ENCODE measurements at regions of chr11 and their contacts with region 1.

Region 1: GRCh38 chr11:1694064-1694845 is 2.7 kb upstream of the KRTAP5-6 start:
- DNase-seq: peak; percentile 47
- ATAC-seq: peak; percentile 93
- H3K4me3 ChIP-seq: peak overlapping the region; percentile 35 to 51; a peak in 3 of 4 replicates
- H3K27ac ChIP-seq: peak overlapping the region; percentile 91
- H3K4me1 ChIP-seq: peaks cover 20% of the 10 kb centered on the region
- H3K27me3 ChIP-seq: no peaks in the 10 kb centered on the region
- CTCF ChIP-seq: peak; percentile 87

Region 2: DNA sequence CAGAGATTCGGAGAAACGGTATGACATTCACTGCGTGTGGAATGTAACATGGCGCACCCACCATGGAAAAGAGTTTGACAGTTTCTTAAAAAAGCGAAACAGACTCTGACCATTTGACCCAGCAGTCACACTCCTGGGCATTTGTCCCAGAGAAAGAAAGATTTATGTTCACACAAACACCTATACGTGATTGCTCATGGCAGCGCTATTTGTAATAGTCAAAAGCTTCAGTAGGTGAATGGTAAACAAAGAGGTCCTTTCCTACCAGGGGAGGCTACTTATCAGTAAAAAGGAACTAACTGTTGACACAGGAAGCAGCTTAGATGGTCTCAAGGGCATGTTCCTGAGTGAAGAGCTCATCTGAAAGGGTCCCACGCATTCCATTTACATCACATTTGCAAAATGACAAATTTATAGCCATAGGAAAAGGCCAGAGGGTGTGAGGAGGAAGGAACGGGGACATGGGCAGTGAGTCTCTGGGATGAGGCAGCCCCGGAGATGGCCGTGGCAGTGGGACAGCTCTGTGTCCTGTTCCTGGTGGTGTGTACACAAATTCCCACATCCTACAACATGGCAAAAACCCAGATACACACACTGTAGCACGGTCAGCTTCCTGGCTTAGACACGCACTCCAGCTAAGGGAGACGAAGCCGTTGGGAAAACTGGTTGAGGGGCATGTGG is 11.9 kb before region 1 on chr11:
- CTCF ChIA-PET with region 1: interaction called, 12 read pairs
- POLR2A ChIA-PET with region 1: no interaction called
- in situ Hi-C with region 1: no loop called
- intact Hi-C with region 1: no loop called
- DNase-seq: peak; percentile 18
- ATAC-seq: peak; percentile 58
- H3K4me3 ChIP-seq: no peak overlapping the region
- H3K27ac ChIP-seq: peak overlapping the region; percentile 10
- H3K4me1 ChIP-seq: peaks cover 11% of the 10 kb centered on the region
- H3K27me3 ChIP-seq: no peaks in the 10 kb centered on the region
- CTCF ChIP-seq: no peak

Region 3: DNA sequence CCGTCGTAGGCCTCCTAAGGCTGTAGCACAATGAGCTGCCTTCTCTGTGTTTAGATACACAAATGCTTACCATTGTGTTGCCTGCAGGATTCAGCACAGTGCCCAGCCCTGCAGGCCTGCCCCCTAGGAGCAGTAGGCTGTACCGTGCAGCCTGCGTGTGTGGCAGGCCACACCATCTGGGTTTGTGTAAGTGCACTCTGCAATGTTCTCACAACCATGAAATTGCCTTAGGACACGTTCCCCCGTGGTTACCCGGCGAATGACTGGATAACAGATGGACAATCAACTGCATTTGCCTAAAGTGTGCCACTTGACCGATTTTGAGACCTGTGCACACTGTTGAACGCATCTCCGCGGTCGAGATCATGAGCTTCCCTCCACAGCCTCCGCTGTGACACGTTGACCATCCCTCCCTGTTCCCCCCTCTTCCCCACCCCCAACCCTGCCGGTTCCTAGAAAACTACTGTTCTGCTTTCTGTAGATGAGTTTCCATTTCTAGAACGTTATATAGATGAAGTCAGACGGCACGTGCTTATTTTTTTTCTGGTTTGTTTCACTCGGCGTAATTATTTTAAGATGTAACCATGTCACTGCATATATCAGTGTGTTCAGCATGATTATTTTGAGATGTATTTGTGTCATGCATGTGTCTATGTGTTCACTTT is 91.6 kb after region 1 on chr11:
- CTCF ChIA-PET with region 1: interaction called, 14 read pairs
- POLR2A ChIA-PET with region 1: no interaction called
- in situ Hi-C with region 1: no loop called
- intact Hi-C with region 1: no loop called
- DNase-seq: no peak
- ATAC-seq: no peak
- H3K4me3 ChIP-seq: no peak overlapping the region
- H3K27ac ChIP-seq: peak overlapping the region; percentile 2; the same call in 1 of the 2 replicates
- H3K4me1 ChIP-seq: peaks cover 37% of the 10 kb centered on the region
- H3K27me3 ChIP-seq: no peaks in the 10 kb centered on the region
- CTCF ChIP-seq: no peak

Region 4: DNA sequence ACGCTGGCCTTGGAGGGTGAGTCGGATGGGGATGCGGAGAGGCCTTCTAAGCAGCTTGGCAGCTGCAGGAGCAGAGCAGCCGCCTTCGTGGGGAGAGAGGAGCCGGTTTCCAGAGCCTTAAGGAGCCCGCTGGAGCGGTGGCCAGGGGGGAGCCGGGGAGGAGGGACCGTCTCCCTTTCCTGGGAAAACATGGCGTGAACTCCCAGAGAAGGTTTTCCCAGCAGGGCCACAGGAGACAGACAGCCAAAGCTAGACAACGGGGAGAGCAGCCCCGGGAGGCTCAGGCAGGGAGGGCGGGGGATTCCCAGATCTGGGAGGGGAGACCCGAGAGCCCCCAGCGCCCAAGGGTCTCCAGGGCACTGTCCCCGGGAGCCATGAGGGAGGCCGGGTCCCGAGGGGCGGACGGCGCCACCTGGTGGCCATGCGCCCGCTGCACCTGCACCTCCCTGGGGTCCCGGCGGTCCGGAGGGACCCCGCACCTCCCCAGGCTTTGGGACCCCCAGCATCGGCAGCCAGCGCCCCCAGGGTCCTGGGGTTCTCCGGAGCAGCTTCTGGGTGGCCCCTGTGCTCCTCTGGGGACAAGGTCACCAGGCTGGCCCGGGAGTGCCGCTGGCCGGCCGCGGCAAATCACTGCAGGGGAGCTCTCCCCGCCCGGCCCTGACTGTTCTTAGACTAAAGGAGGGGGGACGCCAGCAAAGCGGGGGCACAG is 138.1 kb after region 1 on chr11:
- CTCF ChIA-PET with region 1: interaction called, 168 read pairs
- POLR2A ChIA-PET with region 1: no interaction called
- in situ Hi-C with region 1: no loop called
- intact Hi-C with region 1: loop called (anchors 2 kb)
- DNase-seq: no peak
- ATAC-seq: peak; percentile 56
- H3K4me3 ChIP-seq: peak overlapping the region; percentile 17 to 40; a peak in 3 of 4 replicates
- H3K27ac ChIP-seq: peak overlapping the region; percentile 99
- H3K4me1 ChIP-seq: peaks cover 85% of the 10 kb centered on the region
- H3K27me3 ChIP-seq: no peaks in the 10 kb centered on the region
- CTCF ChIP-seq: peak; percentile 100

Region 5: DNA sequence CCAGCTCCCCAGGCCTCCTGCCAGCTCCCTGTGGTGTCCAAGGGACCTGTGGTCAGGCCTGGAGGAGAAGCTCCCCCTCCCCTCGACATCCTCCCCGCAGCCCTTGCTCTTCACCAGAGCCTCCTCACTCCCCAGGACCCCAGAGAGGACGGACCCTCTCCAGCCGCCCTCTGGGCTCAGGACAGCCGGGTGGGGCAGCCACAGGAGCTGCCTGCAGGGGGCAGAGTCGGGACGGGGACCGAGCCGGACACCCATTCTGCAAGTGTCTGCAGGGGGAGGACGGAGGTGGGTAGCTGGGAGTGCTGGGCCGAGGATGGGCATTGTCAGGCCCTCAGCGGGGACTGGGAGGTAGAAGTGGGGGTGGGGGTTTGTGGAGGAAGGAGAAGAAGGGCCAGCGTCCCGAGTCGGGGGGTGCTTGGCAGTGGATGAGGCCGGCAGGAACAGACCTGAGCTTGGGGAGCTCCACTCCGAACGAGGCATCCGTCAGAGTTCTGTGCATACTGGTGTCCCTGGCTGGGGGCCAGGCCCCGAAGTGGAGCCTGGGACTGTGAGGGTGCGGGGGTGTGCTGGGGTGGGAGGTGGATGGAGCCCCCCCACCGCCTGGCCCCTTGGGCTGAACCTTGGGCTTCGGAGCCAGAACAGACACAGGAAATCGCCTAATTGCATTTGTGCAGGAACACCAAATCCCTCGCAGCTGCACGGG is 182.3 kb after region 1 on chr11:
- CTCF ChIA-PET with region 1: interaction called, 10 read pairs
- POLR2A ChIA-PET with region 1: no interaction called
- in situ Hi-C with region 1: no loop called
- intact Hi-C with region 1: no loop called
- DNase-seq: no peak
- ATAC-seq: no peak
- H3K4me3 ChIP-seq: no peak overlapping the region
- H3K27ac ChIP-seq: peak overlapping the region; percentile 44; the same call in 1 of the 2 replicates
- H3K4me1 ChIP-seq: peaks cover 34% of the 10 kb centered on the region
- H3K27me3 ChIP-seq: no peaks in the 10 kb centered on the region
- CTCF ChIP-seq: peak; percentile 93